Ovary (tissue), 10 donors: ENCODE measurements at regions of chr13 and their contacts with region 1.

Region 1: GRCh38 chr13:85806553-85807175 is 7.4 kb upstream of the SLITRK6 start:
- DNase-seq: no peak
- H3K4me3 ChIP-seq: no peak overlapping the region
- H3K27ac ChIP-seq: no peak overlapping the region
- H3K4me1 ChIP-seq: no peaks in the 10 kb centered on the region
- H3K27me3 ChIP-seq: no peaks in the 10 kb centered on the region
- CTCF ChIP-seq: no peak
- EP300 ChIP-seq: no peak
- POLR2A ChIP-seq: no peak

Region 2: DNA sequence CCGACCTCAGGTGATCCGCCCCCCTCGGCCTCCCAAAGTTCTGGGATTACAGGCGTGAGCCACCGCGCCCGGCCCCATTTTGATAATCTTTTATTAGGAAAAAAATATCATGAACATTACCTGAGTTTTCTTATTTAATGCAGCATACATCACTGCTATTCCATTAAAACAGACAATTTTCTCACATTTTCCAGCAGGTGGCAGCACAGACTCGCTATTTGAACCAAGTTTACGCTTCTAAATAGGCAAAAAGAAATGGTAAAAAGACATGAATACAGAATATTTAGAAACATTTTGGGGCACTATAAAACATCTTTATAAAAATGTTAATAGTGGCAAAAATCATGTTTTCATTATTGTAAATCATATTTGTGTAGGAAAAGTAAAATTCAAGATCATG is 910.5 kb before region 1 on chr13:
- intact Hi-C with region 1: loop called in 1 of 4 experiments (anchors 5 kb)
- DNase-seq: peak in 1 of 5 donors; percentile 15
- H3K4me3 ChIP-seq: no peak overlapping the region
- H3K27ac ChIP-seq: no peak overlapping the region
- H3K4me1 ChIP-seq: no peaks in the 10 kb centered on the region
- H3K27me3 ChIP-seq: no peaks in the 10 kb centered on the region
- CTCF ChIP-seq: peak in 1 of 3 donors; percentile 13
- EP300 ChIP-seq: no peak
- POLR2A ChIP-seq: no peak

Region 3: DNA sequence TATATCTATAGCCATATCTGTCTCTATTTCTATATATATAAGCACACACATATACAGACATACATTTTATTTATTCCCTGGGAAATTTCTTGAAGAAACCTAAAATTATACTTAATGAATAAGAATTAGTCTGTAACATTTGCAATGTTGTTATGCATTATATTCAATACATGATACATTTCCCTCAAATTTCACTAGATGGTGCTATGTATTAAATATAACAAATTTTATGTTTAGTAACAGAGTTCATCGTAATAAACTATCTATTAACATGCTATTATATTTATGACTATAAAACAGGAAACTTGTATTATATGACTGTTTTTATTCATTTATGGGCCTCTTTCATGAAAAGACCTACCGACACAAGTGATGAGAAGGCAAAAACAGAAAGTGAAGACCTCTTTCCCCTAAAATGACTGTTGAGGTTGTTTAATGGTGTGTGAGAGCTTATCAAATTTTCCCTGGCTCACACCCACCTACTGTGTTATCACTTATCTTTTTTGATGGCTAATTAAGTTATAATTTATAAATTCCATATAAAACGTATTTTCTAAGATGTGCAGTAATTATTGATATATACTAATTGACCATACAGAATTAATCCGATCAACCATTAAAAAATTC is 889.3 kb before region 1 on chr13:
- intact Hi-C with region 1: loop called in 1 of 4 experiments (anchors 10 kb)
- DNase-seq: no peak
- H3K4me3 ChIP-seq: no peak overlapping the region
- H3K27ac ChIP-seq: no peak overlapping the region
- H3K4me1 ChIP-seq: no peaks in the 10 kb centered on the region
- H3K27me3 ChIP-seq: no peaks in the 10 kb centered on the region
- CTCF ChIP-seq: no peak
- EP300 ChIP-seq: no peak
- POLR2A ChIP-seq: no peak